ENCODE measurements at regions of chr2 and their contacts with region 1.

Region 1: GRCh38 chr2:41894563-41895333 is 153.1 kb upstream of the PKDCC start:
- DNase-seq: peak; percentile 86 to 88
- H3K4me3 ChIP-seq: no peak overlapping the region
- H3K4me3 Mint-ChIP-seq: no peak overlapping the region
- H3K27ac Mint-ChIP-seq: peak overlapping the region; percentile 56
- H3K4me1 ChIP-seq: peaks cover 39% of the 10 kb centered on the region
- H3K4me1 Mint-ChIP-seq: peaks cover 39% of the 10 kb centered on the region
- H3K27me3 ChIP-seq: no peaks in the 10 kb centered on the region
- H3K27me3 Mint-ChIP-seq: no peaks in the 10 kb centered on the region
- CTCF ChIP-seq: no peak

Region 2: DNA sequence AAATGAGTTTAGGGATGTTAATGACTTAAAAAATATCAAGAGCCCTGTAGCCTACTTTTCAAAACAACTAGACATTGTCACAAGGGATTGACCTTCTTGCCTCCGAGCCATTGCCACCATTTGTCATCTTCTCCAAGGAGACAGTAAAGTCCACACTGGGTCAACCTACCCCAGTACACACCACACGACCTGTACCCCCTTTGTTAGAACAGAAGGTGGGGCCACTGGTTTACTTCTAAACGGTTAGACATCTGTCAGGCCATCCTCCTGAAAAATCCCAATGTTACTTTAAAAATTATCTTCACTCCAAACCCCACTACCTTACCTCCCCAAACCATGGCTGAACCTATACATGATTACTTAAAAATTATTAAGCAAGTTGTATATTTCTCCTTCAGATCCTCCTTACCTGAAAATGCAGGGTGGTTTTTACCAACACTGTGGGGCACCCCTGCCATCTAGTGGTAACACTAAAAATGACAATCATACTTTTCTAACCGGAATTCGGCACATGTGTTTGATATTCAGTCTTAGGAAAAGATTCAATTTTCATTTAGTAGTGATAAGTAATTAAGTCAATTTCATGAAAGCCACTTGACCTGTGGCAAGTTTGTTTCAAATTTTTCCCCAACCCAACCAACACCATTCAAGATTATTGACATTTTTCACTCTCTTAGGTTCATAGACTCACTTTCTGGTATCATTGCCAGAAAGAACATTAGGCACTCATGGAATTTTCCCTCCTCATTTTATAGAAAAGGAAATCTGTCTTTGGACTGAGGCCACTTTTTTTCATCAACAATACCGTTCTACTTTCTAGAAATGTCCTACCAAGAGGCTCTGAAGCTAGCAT is 112.2 kb before region 1 on chr2:
- CTCF ChIA-PET with region 1: no interaction called
- POLR2A ChIA-PET with region 1: no interaction called
- intact Hi-C with region 1: no loop called
- DNase-seq: peak in 1 of 2 experiments; percentile 61
- H3K4me3 ChIP-seq: no peak overlapping the region
- H3K4me3 Mint-ChIP-seq: no peak overlapping the region
- H3K27ac Mint-ChIP-seq: no peak overlapping the region
- H3K4me1 ChIP-seq: no peaks in the 10 kb centered on the region
- H3K4me1 Mint-ChIP-seq: peaks cover 6% of the 10 kb centered on the region
- H3K27me3 ChIP-seq: no peaks in the 10 kb centered on the region; the same call in none of the 2 replicates
- H3K27me3 Mint-ChIP-seq: peaks cover 11% of the 10 kb centered on the region
- CTCF ChIP-seq: peak; percentile 78 to 92

Region 3: GRCh38 chr2:41853427-41854216 is 41.1 kb before region 1 on chr2:
- CTCF ChIA-PET with region 1: no interaction called
- POLR2A ChIA-PET with region 1: no interaction called
- intact Hi-C with region 1: loop called (anchors 1 kb)
- DNase-seq: peak; percentile 70 to 78
- H3K4me3 ChIP-seq: no peak overlapping the region
- H3K4me3 Mint-ChIP-seq: no peak overlapping the region
- H3K27ac Mint-ChIP-seq: peak overlapping the region; percentile 8
- H3K4me1 ChIP-seq: peaks cover 15% of the 10 kb centered on the region
- H3K4me1 Mint-ChIP-seq: peaks cover 2% of the 10 kb centered on the region
- H3K27me3 ChIP-seq: no peaks in the 10 kb centered on the region
- H3K27me3 Mint-ChIP-seq: no peaks in the 10 kb centered on the region
- CTCF ChIP-seq: peak; percentile 82 to 94

Region 4: GRCh38 chr2:41906338-41906725 is 11.6 kb after region 1 on chr2:
- CTCF ChIA-PET with region 1: no interaction called
- POLR2A ChIA-PET with region 1: no interaction called
- intact Hi-C with region 1: loop called (anchors 1 kb)
- DNase-seq: no peak
- H3K4me3 ChIP-seq: no peak overlapping the region
- H3K4me3 Mint-ChIP-seq: no peak overlapping the region
- H3K27ac Mint-ChIP-seq: no peak overlapping the region
- H3K4me1 ChIP-seq: peaks cover 14% of the 10 kb centered on the region
- H3K4me1 Mint-ChIP-seq: peaks cover 19% of the 10 kb centered on the region
- H3K27me3 ChIP-seq: no peaks in the 10 kb centered on the region
- H3K27me3 Mint-ChIP-seq: no peaks in the 10 kb centered on the region
- CTCF ChIP-seq: no peak

Region 5: GRCh38 chr2:41922177-41922576 is 27.4 kb after region 1 on chr2:
- CTCF ChIA-PET with region 1: no interaction called
- POLR2A ChIA-PET with region 1: no interaction called
- intact Hi-C with region 1: loop called (anchors 1 kb)
- DNase-seq: peak; percentile 51 to 61
- H3K4me3 ChIP-seq: no peak overlapping the region
- H3K4me3 Mint-ChIP-seq: no peak overlapping the region
- H3K27ac Mint-ChIP-seq: peak overlapping the region; percentile 74
- H3K4me1 ChIP-seq: peaks cover 25% of the 10 kb centered on the region
- H3K4me1 Mint-ChIP-seq: peaks cover 29% of the 10 kb centered on the region
- H3K27me3 ChIP-seq: no peaks in the 10 kb centered on the region
- H3K27me3 Mint-ChIP-seq: no peaks in the 10 kb centered on the region
- CTCF ChIP-seq: no peak

Region 6: DNA sequence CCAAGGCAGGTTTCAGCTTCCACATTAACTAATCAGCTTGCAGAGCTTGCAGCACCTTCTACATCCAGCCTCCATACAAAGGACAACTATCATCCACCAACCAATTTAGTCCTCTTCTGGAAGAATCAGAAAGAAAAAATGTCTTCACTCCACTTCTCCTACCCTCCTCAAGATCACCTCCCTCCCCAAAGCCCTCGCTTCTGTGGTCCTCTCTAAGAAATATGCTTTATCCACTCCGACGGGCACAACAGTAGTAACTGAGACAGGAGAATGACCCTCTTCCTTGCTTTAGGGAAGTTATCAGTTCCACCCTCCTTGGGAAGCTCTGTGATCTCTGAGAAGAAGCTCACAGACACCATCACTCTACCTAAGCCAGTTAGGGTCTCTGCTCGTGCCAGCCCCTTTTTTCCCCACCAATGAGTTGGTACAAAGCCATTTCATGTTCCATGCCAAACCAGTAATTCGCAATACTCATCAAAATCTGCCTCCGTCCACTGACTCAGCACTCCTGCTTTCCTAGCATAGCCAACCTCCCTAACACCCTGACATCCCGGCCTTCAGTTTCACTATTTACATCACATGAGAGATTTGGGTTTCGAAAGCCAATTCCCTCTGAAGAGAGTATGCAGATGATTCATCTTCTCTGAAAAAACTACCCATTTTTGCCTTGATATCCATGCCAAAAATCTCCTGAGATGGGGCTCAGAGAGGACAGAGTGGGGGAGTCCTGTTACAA is 39.0 kb after region 1 on chr2:
- CTCF ChIA-PET with region 1: no interaction called
- POLR2A ChIA-PET with region 1: interaction called, 4 read pairs
- intact Hi-C with region 1: loop called (anchors 1 kb)
- DNase-seq: no peak
- H3K4me3 ChIP-seq: no peak overlapping the region
- H3K4me3 Mint-ChIP-seq: no peak overlapping the region
- H3K27ac Mint-ChIP-seq: peak overlapping the region; percentile 80
- H3K4me1 ChIP-seq: peaks cover 53% of the 10 kb centered on the region
- H3K4me1 Mint-ChIP-seq: peaks cover 37% of the 10 kb centered on the region
- H3K27me3 ChIP-seq: no peaks in the 10 kb centered on the region
- H3K27me3 Mint-ChIP-seq: no peaks in the 10 kb centered on the region
- CTCF ChIP-seq: no peak

Region 7: DNA sequence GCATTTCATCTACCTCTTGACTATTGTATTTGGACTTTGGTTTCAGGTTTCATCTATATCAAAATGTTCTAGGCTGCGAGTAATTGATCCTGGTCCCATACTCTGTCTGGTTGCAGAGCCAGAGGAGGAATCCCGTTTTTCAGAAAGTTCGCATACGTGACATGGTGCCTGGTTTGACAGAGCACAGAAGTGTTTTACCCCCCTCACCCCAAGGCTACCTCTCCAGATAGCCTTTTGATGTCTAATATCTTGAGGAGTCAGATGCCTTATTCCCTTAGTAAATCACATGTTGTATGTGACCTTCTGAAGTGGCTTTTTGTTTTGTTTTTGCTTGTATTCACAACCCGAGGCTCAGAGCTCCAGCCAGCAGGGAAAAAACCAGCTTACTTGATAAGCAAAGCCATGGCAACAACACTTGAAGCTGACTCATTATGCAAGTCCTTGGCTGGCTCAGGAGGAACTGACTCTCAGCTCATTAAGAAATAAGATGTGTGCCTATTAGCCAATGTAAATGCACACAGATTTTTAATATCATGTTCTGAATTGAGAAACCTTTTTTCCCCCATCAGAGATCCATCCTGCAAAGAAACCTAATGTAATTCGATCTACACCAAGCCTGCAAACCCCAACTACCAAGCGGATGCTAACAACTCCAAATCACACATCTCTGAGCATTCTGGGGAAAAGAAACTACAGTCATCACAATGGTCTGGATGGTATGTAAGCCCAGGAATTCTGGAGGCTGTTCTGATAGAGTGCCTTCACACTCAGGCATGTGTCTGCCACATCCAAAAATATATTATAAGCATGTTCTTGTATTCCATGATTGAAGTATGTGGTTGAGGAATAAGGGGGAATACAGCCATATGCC is 827.8 kb after region 1 on chr2:
- CTCF ChIA-PET with region 1: no interaction called
- POLR2A ChIA-PET with region 1: no interaction called
- intact Hi-C with region 1: no loop called
- DNase-seq: no peak
- H3K4me3 ChIP-seq: no peak overlapping the region
- H3K4me3 Mint-ChIP-seq: no peak overlapping the region
- H3K27ac Mint-ChIP-seq: no peak overlapping the region
- H3K4me1 ChIP-seq: no peaks in the 10 kb centered on the region
- H3K4me1 Mint-ChIP-seq: no peaks in the 10 kb centered on the region
- H3K27me3 ChIP-seq: no peaks in the 10 kb centered on the region
- H3K27me3 Mint-ChIP-seq: no peaks in the 10 kb centered on the region
- CTCF ChIP-seq: no peak